ENCODE measurements at regions of chr5 and their contacts with region 1.

Region 1: GRCh38 chr5:173745123-173745522 is 128.7 kb upstream of the BOD1 start:
- DNase-seq: peak in 1 of 2 experiments; percentile 41
- H3K4me3 ChIP-seq: peak overlapping the region; percentile 8; the same call in 1 of the 2 replicates
- H3K27ac ChIP-seq: peak overlapping the region; percentile 80
- H3K4me1 ChIP-seq: peaks cover 27% of the 10 kb centered on the region
- H3K27me3 ChIP-seq: no peaks in the 10 kb centered on the region
- CTCF ChIP-seq: no peak

Region 2: GRCh38 chr5:173498286-173498685 is 246.8 kb before region 1 on chr5:
- CTCF ChIA-PET with region 1: no interaction called
- POLR2A ChIA-PET with region 1: no interaction called
- intact Hi-C with region 1: no loop called
- DNase-seq: peak; percentile 38 to 88
- H3K4me3 ChIP-seq: no peak overlapping the region
- H3K27ac ChIP-seq: peak overlapping the region; percentile 81
- H3K4me1 ChIP-seq: peaks cover 33% of the 10 kb centered on the region
- H3K27me3 ChIP-seq: no peaks in the 10 kb centered on the region
- CTCF ChIP-seq: no peak

Region 3: GRCh38 chr5:173853370-173854131 is 108.4 kb after region 1 on chr5:
- CTCF ChIA-PET with region 1: no interaction called
- POLR2A ChIA-PET with region 1: no interaction called
- intact Hi-C with region 1: no loop called
- DNase-seq: no peak
- H3K4me3 ChIP-seq: no peak overlapping the region
- H3K27ac ChIP-seq: peak overlapping the region; percentile 35; the same call in 1 of the 2 replicates
- H3K4me1 ChIP-seq: peaks cover 37% of the 10 kb centered on the region
- H3K27me3 ChIP-seq: no peaks in the 10 kb centered on the region
- CTCF ChIP-seq: no peak

Region 4: GRCh38 chr5:173868076-173868880 is 123.2 kb after region 1 on chr5:
- CTCF ChIA-PET with region 1: no interaction called
- POLR2A ChIA-PET with region 1: no interaction called
- intact Hi-C with region 1: loop called (anchors 5 kb)
- DNase-seq: peak; percentile 72 to 96
- H3K4me3 ChIP-seq: peak overlapping the region; percentile 35; the same call in 1 of the 2 replicates
- H3K27ac ChIP-seq: peak overlapping the region; percentile 84
- H3K4me1 ChIP-seq: peaks cover 61% of the 10 kb centered on the region
- H3K27me3 ChIP-seq: no peaks in the 10 kb centered on the region
- CTCF ChIP-seq: no peak

Region 5: GRCh38 chr5:173917788-173918786 is 173.0 kb after region 1 on chr5:
- CTCF ChIA-PET with region 1: no interaction called
- POLR2A ChIA-PET with region 1: no interaction called
- intact Hi-C with region 1: loop called (anchors 5 kb)
- DNase-seq: peak; percentile 53 to 76
- H3K4me3 ChIP-seq: peak overlapping the region; percentile 79
- H3K27ac ChIP-seq: peak overlapping the region; percentile 86
- H3K4me1 ChIP-seq: peaks cover 29% of the 10 kb centered on the region
- H3K27me3 ChIP-seq: no peaks in the 10 kb centered on the region
- CTCF ChIP-seq: peak; percentile 43; the same call in 1 of the 2 replicates

Measured in PC-9 (cell line).